Activated CD4-positive, alpha-beta T cell treated with anti-CD3 and anti-CD28 coated beads for 36 hours (primary cell): ENCODE measurements at regions of chr4 and their contacts with region 1.

Region 1: DNA sequence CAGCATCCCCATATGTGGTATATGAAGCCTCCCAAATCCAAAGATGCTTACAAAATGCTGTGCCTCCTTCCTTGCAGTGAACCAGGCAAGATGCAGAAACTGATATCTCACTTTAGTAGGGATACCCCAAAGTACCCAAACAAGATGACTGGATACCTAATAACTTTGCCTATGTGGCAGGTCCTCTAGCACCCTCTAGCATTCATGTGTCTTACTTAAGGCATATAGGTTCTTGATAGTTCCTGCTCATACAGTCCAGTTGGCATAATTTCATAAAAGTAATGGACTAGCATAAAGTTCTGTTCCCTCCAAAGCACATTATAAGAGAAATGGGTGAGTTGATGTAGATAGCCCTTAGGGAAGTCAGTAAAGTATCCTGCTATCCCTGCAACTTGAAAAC is 36.8 kb upstream of the SPP1 start:
- DNase-seq: no peak
- ATAC-seq: no peak
- H3K4me3 Mint-ChIP-seq: no peak overlapping the region
- H3K27ac Mint-ChIP-seq: no peak overlapping the region
- H3K4me1 Mint-ChIP-seq: no peaks in the 10 kb centered on the region
- H3K27me3 Mint-ChIP-seq: peaks cover 4% of the 10 kb centered on the region

Region 2: GRCh38 chr4:87919941-87920340 is 18.8 kb before region 1 on chr4:
- CTCF ChIA-PET with region 1: no interaction called
- POLR2A ChIA-PET with region 1: no interaction called
- intact Hi-C with region 1: loop called in 1 of 2 experiments (anchors 2 kb)
- DNase-seq: no peak
- ATAC-seq: no peak
- H3K4me3 Mint-ChIP-seq: no peak overlapping the region
- H3K27ac Mint-ChIP-seq: no peak overlapping the region
- H3K4me1 Mint-ChIP-seq: no peaks in the 10 kb centered on the region
- H3K27me3 Mint-ChIP-seq: no peaks in the 10 kb centered on the region

Region 3: GRCh38 chr4:87926554-87927098 is 12.1 kb before region 1 on chr4:
- CTCF ChIA-PET with region 1: interaction called, 3 read pairs
- POLR2A ChIA-PET with region 1: no interaction called
- intact Hi-C with region 1: loop called (anchors 1 kb)
- DNase-seq: no peak
- ATAC-seq: no peak
- H3K4me3 Mint-ChIP-seq: no peak overlapping the region
- H3K27ac Mint-ChIP-seq: no peak overlapping the region
- H3K4me1 Mint-ChIP-seq: no peaks in the 10 kb centered on the region
- H3K27me3 Mint-ChIP-seq: peaks cover 15% of the 10 kb centered on the region